ENCODE measurements at regions of chr1 and their contacts with region 1.

Region 1: GRCh38 chr1:66503841-66504470 is 30.0 kb upstream of the SGIP1 start:
- DNase-seq: no peak
- ATAC-seq: no peak
- H3K4me3 Mint-ChIP-seq: no peak overlapping the region
- H3K27ac Mint-ChIP-seq: no peak overlapping the region
- H3K4me1 Mint-ChIP-seq: no peaks in the 10 kb centered on the region
- H3K27me3 Mint-ChIP-seq: peaks cover 15% of the 10 kb centered on the region
- CTCF ChIP-seq: no peak

Region 2: GRCh38 chr1:65958561-65959350 is 545.2 kb before region 1 on chr1:
- CTCF ChIA-PET with region 1: interaction called, 17 read pairs
- POLR2A ChIA-PET with region 1: no interaction called
- intact Hi-C with region 1: loop called (anchors 1 kb)
- DNase-seq: no peak
- ATAC-seq: peak; percentile 40
- H3K4me3 Mint-ChIP-seq: no peak overlapping the region
- H3K27ac Mint-ChIP-seq: no peak overlapping the region
- H3K4me1 Mint-ChIP-seq: peaks cover 4% of the 10 kb centered on the region
- H3K27me3 Mint-ChIP-seq: no peaks in the 10 kb centered on the region
- CTCF ChIP-seq: peak; percentile 44

Measured in activated B cell treated with CpG ODN at 0.5 μM for 24 hours (primary cell).